ENCODE measurements at regions of chrX and their contacts with region 1.

Region 1: DNA sequence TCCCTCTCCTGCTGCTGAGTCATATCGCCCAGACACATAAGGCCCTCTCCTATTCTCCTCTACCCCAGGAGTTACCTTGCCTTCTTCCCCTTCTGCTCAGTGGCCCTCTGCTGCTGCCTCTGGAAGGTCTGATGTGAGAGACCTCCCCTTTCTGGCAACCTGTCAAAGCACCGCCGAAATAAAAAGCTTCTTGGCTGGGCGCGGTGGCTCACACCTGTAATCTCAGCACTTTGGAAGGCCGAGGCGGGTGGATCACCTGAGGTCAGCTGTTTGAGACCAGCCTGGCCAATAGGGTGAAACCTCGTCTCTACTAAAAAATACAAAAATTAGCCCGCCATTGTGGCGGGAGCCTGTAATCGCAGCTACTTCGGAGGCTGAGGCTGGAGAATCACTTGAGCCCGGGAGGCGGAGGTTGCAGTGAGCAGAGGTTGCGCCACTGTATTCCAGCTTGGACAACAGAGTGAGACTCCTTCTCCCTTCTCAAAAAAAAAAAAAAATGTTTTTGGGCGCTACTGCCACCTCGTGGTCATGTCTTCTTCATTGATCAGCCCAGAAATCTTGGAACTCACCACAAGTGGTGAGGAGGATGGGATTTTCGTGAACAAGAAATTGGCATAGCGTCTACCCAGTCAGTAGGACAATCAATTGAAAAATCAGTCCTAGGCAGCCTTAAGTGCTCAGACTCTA is 8.6 kb upstream of the ZXDA start:
- DNase-seq: no peak
- H3K4me3 ChIP-seq: peak overlapping the region in 1 of 3 donors; percentile 29
- H3K27ac ChIP-seq: no peak overlapping the region
- H3K4me1 ChIP-seq: no peaks in the 10 kb centered on the region
- H3K27me3 ChIP-seq: peaks cover 0 to 34% of the 10 kb centered on the region in 2 donors
- CTCF ChIP-seq: peak in 1 of 3 donors; percentile 30
- POLR2A ChIP-seq: no peak

Region 2: GRCh38 chrX:57587607-57588006 is 331.3 kb before region 1 on chrX:
- intact Hi-C with region 1: loop called (anchors 10 kb)
- DNase-seq: no peak
- H3K4me3 ChIP-seq: no peak overlapping the region
- H3K27ac ChIP-seq: no peak overlapping the region
- H3K4me1 ChIP-seq: no peaks in the 10 kb centered on the region
- H3K27me3 ChIP-seq: peaks cover 0 to 10% of the 10 kb centered on the region in 2 donors
- CTCF ChIP-seq: no peak
- POLR2A ChIP-seq: no peak